ENCODE measurements at regions of chr5 and their contacts with region 1.

Region 1: DNA sequence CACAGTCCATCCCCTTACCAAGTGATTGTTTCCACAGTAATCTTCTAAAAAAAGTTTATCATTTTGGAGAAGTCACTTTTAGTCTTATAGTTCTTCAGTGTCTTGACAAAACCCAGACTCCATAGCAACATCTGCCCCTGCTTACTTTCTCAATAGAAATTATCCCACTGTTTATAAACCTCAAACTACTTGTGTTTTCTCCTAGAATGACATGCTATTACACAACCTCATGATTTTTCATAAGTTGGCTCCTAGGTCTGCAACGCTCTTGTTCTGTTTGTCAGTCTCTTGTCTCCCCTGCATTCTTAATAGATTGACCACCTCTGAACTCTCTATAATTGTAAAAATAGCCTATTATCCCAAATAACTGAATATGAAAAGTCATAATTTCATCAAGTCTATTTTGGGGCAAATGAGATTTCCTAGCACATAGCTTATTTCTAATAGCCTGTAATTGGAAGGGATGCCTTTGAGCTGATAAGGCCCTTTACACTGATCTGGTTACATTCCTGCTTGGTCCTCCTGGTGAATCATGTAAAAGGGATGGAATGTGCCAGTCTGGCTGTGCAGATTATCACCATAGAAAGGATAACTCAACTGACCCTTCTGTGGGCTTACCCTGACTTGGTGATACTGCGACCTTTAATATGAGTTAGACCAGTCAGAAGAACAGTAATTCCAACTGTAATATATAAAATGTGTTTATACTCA is 69.6 kb downstream of the CHSY3 start:
- DNase-seq: no peak
- H3K4me3 ChIP-seq: no peak overlapping the region
- CTCF ChIP-seq: no peak
- POLR2A ChIP-seq: no peak

Region 2: GRCh38 chr5:129746876-129747275 is 227.0 kb before region 1 on chr5:
- intact Hi-C with region 1: no loop called
- DNase-seq: no peak
- H3K4me3 ChIP-seq: no peak overlapping the region
- CTCF ChIP-seq: no peak
- POLR2A ChIP-seq: no peak

Region 3: DNA sequence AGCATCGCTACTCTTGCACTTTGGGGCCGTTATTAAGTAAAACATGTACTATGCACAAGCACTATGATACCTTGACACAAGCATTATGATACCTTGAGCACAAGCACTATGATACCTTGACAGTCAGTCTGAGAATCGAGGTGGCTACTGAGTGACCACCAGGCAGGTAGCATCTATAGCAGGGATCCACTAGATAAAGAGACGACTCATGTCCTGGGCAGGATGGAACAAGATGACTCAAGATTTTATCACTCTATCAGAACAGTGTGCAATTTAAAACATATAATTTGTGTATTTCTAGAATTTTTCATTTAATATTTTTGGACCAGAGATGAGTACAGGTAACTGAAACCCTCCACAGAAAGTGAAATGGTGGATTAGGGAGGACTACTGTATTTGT is 52.7 kb before region 1 on chr5:
- intact Hi-C with region 1: loop called (anchors 2 kb)
- DNase-seq: no peak
- H3K4me3 ChIP-seq: no peak overlapping the region
- CTCF ChIP-seq: no peak
- POLR2A ChIP-seq: no peak

Region 4: GRCh38 chr5:130011986-130012385 is 38.1 kb after region 1 on chr5:
- intact Hi-C with region 1: no loop called
- DNase-seq: no peak
- H3K4me3 ChIP-seq: no peak overlapping the region
- CTCF ChIP-seq: no peak
- POLR2A ChIP-seq: no peak

Region 5: GRCh38 chr5:130488252-130488651 is 514.4 kb after region 1 on chr5:
- intact Hi-C with region 1: no loop called
- DNase-seq: no peak
- H3K4me3 ChIP-seq: no peak overlapping the region
- CTCF ChIP-seq: no peak
- POLR2A ChIP-seq: no peak

Measured in lower leg skin (tissue), 4 donors.